ENCODE measurements at regions of chr12 and their contacts with region 1.

Region 1: DNA sequence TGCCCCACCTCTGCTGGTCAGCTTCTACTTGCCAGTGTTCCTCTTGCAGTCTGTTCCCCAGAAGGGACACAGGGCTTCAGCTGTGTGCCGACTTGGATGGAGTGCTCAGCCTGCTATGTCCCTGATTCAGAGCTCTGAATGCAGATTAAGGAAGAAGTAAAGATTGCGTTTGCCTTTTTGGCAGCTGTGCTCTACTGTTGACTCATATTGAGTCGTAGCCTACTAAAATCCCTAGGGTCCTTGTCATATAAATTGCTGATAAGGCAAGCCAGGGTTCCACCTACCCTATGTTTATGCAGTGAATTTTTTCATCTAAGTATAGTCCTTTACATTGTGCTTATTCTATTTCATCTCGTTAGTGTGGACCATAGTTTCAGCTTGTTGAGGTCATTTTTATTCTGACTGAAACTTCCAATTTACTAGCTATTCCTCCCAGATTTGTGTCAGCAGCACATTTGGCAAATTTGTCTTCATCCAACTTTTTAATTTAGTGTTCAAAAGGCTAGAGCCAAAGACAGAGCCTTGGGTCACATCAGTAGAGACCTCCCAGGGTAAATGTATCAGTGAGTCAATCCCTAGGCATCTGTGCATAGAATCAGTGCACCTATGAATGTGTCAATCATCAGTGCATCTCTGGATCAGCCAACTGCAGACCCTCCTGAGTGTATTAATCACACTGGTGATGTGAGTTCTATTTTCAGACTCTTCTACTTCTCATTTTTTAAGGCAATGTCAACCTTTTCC is 31.9 kb downstream of the CACNA1C start:
- DNase-seq: peak in 1 of 2 donors; percentile 40
- ATAC-seq: peak; percentile 64 to 83 (median 72)
- H3K4me3 ChIP-seq: no peak overlapping the region
- H3K27ac ChIP-seq: peak overlapping the region in 9 of 10 donors; percentile 14 to 74 (median 54)
- H3K4me1 ChIP-seq: peaks cover 17 to 76% (median 57%) of the 10 kb centered on the region in 9 donors
- H3K27me3 ChIP-seq: no peaks in the 10 kb centered on the region
- CTCF ChIP-seq: no peak

Region 2: GRCh38 chr12:2154050-2154449 is 69.3 kb after region 1 on chr12:
- intact Hi-C with region 1: loop called in 2 of 10 experiments (anchors 5 to 10 kb)
- DNase-seq: peak in 1 of 2 donors; percentile 36
- ATAC-seq: peak; percentile 18 to 70 (median 43)
- H3K4me3 ChIP-seq: no peak overlapping the region
- H3K27ac ChIP-seq: peak overlapping the region in 9 of 10 donors; percentile 41 to 79 (median 72)
- H3K4me1 ChIP-seq: peaks cover 29 to 92% (median 67%) of the 10 kb centered on the region in 9 donors
- H3K27me3 ChIP-seq: no peaks in the 10 kb centered on the region
- CTCF ChIP-seq: no peak

Region 3: DNA sequence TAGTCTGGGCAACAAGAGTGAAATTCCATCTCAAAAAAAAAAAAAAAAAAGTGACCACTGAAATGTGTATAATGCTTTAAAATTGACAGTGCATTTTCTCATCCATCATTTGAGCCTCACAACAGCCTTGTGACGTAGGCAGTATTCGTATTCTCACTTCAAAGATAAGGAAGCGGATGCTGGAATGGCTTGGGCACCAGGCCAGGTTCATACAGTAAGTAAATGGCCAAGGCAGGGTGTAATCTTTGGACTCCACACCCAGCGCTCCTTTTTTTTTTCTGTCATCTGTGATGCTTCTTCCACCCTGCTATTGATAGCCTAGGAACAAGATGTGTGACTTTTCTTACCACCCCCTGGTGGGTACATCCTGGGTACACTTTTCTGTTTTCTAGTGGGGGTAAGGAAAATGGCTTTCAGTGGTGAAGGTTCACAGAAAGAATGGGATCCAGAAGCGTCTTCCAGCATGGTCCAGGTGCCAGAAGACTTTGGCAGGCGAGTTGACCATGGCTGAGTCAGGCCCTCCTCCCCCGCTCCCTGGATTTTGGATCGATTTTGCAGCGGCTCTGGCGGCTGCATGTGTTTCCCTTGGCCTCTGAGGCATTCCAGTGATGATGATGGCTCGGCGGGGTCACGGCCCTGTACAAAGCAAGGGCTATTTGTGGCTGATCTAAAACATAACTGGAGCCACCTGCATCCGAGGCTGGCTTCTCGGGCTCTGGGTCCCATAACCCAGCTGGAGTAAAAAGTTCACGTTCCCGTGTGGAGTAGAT is 78.6 kb after region 1 on chr12:
- intact Hi-C with region 1: loop called in 2 of 10 experiments (anchors 5 to 10 kb)
- DNase-seq: peak; percentile 85 to 93
- ATAC-seq: peak; percentile 85 to 95 (median 92)
- H3K4me3 ChIP-seq: no peak overlapping the region
- H3K27ac ChIP-seq: peak overlapping the region; percentile 47 to 94 (median 81)
- H3K4me1 ChIP-seq: peaks cover 23 to 67% (median 44%) of the 10 kb centered on the region in 9 donors
- H3K27me3 ChIP-seq: no peaks in the 10 kb centered on the region
- CTCF ChIP-seq: peak in 1 of 9 donors; percentile 11

Region 4: GRCh38 chr12:2179953-2180736 is 95.4 kb after region 1 on chr12:
- intact Hi-C with region 1: loop called in 1 of 10 experiments (anchors 5 kb)
- DNase-seq: peak; percentile 56 to 65
- ATAC-seq: peak; percentile 52 to 92 (median 78)
- H3K4me3 ChIP-seq: no peak overlapping the region
- H3K27ac ChIP-seq: peak overlapping the region; percentile 65 to 84 (median 72)
- H3K4me1 ChIP-seq: peaks cover 10 to 76% (median 47%) of the 10 kb centered on the region in 9 donors
- H3K27me3 ChIP-seq: no peaks in the 10 kb centered on the region
- CTCF ChIP-seq: no peak

Region 5: GRCh38 chr12:2212971-2213869 is 128.5 kb after region 1 on chr12:
- intact Hi-C with region 1: no loop called
- DNase-seq: no peak
- ATAC-seq: peak; percentile 22 to 76 (median 56)
- H3K4me3 ChIP-seq: no peak overlapping the region
- H3K27ac ChIP-seq: peak overlapping the region; percentile 24 to 79 (median 62)
- H3K4me1 ChIP-seq: peaks cover 11 to 90% (median 63%) of the 10 kb centered on the region in 9 donors
- H3K27me3 ChIP-seq: peaks cover 0 to 4% (median 0%) of the 10 kb centered on the region in 7 donors
- CTCF ChIP-seq: no peak

Measured in heart right ventricle (tissue), 16 donors.